Right ventricle myocardium inferior (tissue), 1 donor: ENCODE measurements at regions of chr6 and their contacts with region 1.

Region 1: GRCh38 chr6:42901536-42901957 is 14.3 kb upstream of the PTCRA start:
- DNase-seq: peak; percentile 89
- ATAC-seq: peak; percentile 97

Region 2: DNA sequence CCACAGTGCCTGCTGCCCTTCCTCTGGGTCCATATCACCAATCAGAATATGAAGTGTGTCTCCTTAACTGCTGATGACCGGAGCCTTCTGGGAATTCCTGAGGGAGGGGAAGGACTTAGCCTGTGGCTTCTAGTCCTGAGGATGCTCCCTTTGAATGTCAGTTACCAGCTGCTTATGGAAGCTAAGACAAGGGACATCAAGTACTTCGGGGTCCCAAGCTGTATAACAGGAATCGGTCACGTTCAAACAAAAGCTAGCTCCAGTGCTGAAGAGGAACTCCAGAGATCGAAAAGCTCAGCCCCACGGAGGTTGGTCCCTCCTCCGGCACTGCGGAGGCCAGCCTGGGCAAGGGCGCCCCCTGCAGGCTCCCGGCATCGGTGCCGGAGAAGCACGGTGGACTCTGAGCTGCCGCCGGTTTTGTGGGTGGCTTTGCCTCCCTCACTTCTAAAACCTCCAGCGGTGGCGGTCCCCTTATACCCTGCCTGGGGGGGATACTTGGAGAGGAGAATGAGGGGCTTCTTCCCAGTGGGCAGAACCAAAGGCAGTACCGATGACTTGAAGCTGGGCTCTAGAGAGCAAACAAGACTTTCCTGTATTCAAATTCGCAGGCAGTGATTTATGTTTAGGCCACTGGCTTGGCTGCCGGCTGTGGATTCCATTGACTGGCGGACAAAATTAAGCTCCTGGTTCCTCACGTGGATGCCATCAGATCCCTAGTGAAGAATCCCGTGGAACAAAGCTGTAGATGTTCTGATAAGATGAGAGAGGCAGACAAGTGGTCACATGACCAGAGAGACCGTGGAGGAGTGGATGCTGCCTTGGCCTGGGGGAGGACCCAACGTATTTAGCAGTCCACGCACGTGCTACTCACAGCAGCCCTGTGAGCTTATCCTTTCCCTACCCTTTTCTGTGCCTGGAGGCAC is 353.9 kb before region 1 on chr6:
- intact Hi-C with region 1: no loop called
- DNase-seq: peak; percentile 94
- ATAC-seq: peak; percentile 99

Region 3: DNA sequence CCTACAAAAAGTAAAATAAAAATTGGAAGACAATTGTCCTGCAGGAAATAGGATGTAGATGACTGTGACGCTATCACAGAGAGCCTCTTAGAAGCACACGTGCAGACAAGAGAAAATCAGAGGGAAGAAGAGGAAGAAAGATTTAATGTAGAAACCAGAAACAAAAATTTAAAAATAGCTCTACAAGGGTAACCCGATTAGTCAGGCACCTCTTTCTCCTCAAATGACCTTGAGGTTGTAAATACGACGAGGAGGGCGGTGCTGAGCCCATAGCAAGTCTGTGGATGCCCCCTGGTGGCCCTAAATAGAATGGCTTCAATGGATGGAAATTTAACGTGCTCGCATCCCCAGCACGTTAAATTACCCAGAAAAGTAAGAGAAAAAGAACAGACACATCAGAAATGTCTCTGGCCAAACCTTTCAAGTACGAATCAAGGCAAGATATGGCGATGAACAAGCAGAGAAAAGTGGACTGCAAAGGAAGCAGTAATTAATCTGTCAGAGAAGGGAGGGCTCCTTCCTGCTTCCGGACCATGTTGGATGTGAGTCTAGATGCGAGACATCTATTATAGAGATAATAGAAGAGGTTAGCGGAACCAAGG is 175.0 kb before region 1 on chr6:
- intact Hi-C with region 1: loop called (anchors 5 kb)
- DNase-seq: peak; percentile 84
- ATAC-seq: peak; percentile 95

Region 4: DNA sequence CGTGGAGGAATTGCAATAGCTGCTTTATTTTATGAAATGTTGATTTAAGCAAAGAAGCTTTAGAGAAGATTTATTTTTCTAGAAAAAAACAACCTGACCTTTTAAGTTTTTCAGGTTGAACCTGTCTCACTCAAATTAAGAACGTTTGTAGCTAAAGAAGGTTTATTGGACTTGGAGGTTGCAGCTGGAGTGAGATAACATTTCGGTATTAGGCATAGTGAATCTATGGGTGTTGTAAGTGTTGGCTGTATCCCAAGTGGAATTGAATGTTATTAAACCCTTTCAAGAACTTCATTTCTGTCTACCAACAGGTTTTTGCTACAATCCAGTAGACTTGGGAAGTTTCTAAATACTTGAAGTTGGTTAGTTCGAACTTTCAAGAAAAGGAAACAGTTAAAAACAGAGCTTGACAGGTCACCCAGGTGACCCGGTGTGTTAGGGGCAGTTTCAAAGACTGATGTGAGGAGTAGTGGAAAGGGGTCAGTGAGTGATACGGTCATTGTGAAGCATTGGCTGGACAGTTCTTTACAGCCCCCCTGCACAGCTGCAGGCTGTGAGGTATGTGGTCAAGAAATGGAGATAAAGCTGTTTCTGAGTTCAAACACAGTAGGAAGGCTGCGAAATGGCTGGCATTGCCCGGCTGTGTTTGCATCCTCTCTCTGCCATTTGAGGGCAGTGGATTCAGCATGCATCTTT is 153.2 kb before region 1 on chr6:
- intact Hi-C with region 1: no loop called
- DNase-seq: no peak
- ATAC-seq: no peak

Region 5: GRCh38 chr6:42984001-42984923 is 82.7 kb after region 1 on chr6 and contains the start of gene PPP2R5D:
- intact Hi-C with region 1: loop called (anchors 5 kb)
- DNase-seq: peak; percentile 99
- ATAC-seq: peak; percentile 96
- total RNA-seq, gene PPP2R5D: 34.2 TPM

Region 6: GRCh38 chr6:43059168-43060033 is 157.9 kb after region 1 on chr6 and contains the starts of genes KLC4 and MRPL2:
- intact Hi-C with region 1: loop called (anchors 5 kb)
- DNase-seq: peak; percentile 98
- ATAC-seq: peak; percentile 98
- total RNA-seq, gene KLC4: 30.0 TPM
- total RNA-seq, gene MRPL2: 99.7 TPM

Region 7: DNA sequence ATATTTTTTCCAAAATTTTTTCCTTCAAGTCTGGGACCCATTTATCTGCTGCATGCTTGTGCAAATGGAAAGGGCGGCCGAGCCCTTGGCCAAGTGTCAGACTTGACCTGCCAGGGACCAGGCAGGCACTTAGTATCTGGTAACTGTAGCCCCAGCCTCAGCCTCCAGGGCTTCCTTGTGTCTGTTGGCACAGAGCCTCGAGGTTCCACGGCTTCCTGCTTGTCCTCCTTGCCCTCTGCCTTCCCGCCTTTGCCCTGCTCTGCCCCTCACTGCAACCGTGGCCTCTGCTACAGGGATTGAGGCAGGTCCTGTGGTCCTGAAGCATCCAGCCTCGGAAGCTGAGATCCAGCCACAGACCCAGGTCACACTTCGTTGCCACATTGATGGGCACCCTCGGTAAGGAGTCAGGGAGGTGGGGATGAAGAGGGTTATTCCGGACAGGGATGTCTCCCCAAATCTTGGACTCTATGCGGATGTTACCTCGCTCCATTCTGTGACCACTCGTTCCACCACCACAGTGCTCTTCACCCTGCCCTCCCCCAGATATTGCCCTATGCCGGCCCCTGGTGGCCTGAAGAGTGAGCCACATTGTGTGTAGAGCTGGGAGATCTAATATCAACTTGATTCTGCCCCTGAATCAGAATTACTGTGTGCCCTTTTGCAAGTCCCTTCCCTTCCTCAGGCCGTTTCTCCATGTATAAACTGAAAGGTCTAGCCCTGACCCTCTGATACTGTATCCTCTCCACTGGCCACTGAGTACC is 228.1 kb after region 1 on chr6:
- intact Hi-C with region 1: loop called (anchors 5 kb)
- DNase-seq: no peak
- ATAC-seq: peak; percentile 70

Region 8: DNA sequence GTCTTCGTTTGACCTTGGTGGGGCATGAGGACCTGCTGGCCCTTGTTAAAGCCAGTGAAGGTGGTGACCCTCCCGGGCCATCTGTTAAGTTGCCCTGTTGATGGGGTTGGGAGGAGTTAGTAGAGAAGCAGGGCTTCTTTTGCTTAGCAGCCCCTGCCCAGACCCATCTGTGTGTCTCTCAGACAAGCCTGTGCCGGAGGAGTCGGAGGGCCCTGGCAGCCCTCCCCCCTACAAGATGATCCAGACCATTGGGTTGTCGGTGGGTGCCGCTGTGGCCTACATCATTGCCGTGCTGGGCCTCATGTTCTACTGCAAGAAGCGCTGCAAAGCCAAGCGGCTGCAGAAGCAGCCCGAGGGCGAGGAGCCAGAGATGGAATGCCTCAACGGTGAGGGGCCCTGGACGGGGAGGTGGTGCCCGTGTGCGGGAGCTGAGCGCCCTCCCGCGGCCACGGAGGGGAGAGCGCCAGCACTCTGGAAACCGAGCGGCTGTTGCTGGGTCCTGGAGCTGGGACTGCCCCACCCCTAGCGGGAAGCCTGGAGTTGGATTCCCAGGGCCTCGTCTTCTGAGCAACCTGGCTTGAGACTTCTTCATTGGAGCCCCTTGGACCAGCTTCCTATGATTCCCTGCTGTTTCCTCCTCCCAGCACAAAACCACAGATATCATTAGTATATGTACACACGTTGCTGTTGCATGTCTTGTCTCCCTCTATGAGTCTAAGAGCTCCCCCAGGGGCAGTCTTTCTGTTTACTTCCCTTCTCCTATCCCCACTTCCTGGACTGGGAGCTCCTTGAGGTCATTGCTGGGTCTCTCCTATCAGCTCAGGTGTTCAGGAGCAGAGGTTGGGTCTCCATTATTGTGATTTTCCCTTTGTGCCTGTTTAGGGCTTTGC is 241.9 kb after region 1 on chr6:
- intact Hi-C with region 1: loop called (anchors 1 kb)
- DNase-seq: peak; percentile 90
- ATAC-seq: peak; percentile 97